Vagina (tissue), 2 donors: ENCODE measurements at regions of chr4 and their contacts with region 1.

Region 1: DNA sequence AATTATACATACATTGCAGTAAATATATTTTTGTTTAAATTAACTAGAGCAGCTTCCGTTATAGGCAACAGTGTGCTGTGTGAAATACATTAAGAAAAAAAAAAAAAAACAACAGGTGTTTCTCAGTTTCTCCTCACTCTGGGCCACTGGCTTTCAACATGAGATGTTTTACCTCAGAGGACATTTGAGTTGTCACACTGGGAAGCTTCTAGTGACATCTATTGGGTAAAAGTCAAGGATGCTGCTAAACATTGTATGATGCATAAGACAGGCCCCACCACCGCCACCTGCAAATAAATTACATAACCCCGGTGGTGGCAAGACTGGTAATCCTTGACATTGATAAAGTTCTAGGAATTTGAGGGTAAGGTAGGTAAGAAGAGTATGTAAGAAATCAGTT is 1512.2 kb downstream of the C4orf33 start:
- DNase-seq: no peak
- H3K4me3 ChIP-seq: no peak overlapping the region
- H3K27ac ChIP-seq: no peak overlapping the region
- H3K4me1 ChIP-seq: no peaks in the 10 kb centered on the region
- H3K27me3 ChIP-seq: no peaks in the 10 kb centered on the region
- CTCF ChIP-seq: no peak
- POLR2A ChIP-seq: no peak

Region 2: DNA sequence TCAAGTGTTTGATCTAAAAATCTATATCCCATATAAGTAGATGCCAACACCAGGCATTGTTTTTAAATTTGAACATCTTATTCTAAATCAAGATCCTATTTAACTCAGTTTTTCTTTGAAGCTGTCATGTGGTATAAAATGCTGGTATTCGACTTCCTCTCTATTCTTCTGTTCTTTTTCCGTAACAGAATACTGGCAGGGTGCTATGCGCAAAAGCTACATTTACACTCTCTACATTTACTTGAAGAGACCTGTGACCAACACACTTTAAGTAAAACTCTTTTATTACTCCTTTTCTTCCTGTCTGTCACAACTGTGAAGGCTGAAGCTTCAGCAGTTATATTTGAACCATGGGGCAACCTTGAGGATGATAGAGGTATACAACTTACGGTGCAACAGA is 899.3 kb before region 1 on chr4:
- intact Hi-C with region 1: loop called (anchors 5 kb)
- DNase-seq: no peak
- H3K4me3 ChIP-seq: no peak overlapping the region
- H3K27ac ChIP-seq: no peak overlapping the region
- H3K4me1 ChIP-seq: no peaks in the 10 kb centered on the region
- H3K27me3 ChIP-seq: no peaks in the 10 kb centered on the region
- CTCF ChIP-seq: no peak
- POLR2A ChIP-seq: no peak